Caco-2 (cell line): ENCODE measurements at regions of chr6 and their contacts with region 1.

Region 1: GRCh38 chr6:43303751-43304331 is 4.8 kb downstream of the CRIP3 start:
- DNase-seq: no peak
- H3K4me3 ChIP-seq: no peak overlapping the region
- H3K4me3 Mint-ChIP-seq: no peak overlapping the region
- H3K27ac Mint-ChIP-seq: no peak overlapping the region
- H3K4me1 ChIP-seq: no peaks in the 10 kb centered on the region
- H3K4me1 Mint-ChIP-seq: no peaks in the 10 kb centered on the region
- H3K27me3 ChIP-seq: no peaks in the 10 kb centered on the region
- H3K27me3 Mint-ChIP-seq: no peaks in the 10 kb centered on the region
- CTCF ChIP-seq: no peak

Region 2: GRCh38 chr6:43421831-43422230 is 118.0 kb after region 1 on chr6:
- CTCF ChIA-PET with region 1: no interaction called
- POLR2A ChIA-PET with region 1: interaction called, 11 read pairs
- intact Hi-C with region 1: no loop called
- DNase-seq: no peak
- H3K4me3 ChIP-seq: no peak overlapping the region
- H3K4me3 Mint-ChIP-seq: no peak overlapping the region
- H3K27ac Mint-ChIP-seq: no peak overlapping the region
- H3K4me1 ChIP-seq: no peaks in the 10 kb centered on the region
- H3K4me1 Mint-ChIP-seq: no peaks in the 10 kb centered on the region
- H3K27me3 ChIP-seq: no peaks in the 10 kb centered on the region
- H3K27me3 Mint-ChIP-seq: no peaks in the 10 kb centered on the region
- CTCF ChIP-seq: no peak

Region 3: DNA sequence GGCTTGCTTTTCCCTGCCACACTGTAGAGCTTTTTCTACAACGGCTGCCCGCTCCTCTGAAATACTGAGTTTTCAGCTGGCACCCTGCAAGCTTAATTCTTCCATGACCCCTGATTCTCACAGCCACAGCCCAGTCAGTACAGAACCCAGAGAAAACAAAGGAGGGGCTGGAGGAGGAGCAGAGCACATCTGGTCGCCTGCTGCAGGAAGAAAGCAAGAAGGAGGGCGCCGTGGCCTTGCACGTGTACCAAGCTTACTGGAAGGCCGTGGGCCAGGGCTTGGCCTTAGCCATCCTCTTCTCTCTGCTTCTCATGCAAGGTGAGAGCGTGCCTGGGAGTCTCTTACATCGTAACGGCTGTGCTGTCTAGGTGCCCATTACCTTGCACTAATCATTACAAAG is 140.2 kb after region 1 on chr6:
- CTCF ChIA-PET with region 1: no interaction called
- POLR2A ChIA-PET with region 1: no interaction called
- intact Hi-C with region 1: no loop called
- DNase-seq: no peak
- H3K4me3 ChIP-seq: no peak overlapping the region
- H3K4me3 Mint-ChIP-seq: no peak overlapping the region
- H3K27ac Mint-ChIP-seq: no peak overlapping the region
- H3K4me1 ChIP-seq: no peaks in the 10 kb centered on the region
- H3K4me1 Mint-ChIP-seq: no peaks in the 10 kb centered on the region
- H3K27me3 ChIP-seq: no peaks in the 10 kb centered on the region
- H3K27me3 Mint-ChIP-seq: no peaks in the 10 kb centered on the region
- CTCF ChIP-seq: no peak